ENCODE measurements at regions of chr1 and their contacts with region 1.

Region 1: DNA sequence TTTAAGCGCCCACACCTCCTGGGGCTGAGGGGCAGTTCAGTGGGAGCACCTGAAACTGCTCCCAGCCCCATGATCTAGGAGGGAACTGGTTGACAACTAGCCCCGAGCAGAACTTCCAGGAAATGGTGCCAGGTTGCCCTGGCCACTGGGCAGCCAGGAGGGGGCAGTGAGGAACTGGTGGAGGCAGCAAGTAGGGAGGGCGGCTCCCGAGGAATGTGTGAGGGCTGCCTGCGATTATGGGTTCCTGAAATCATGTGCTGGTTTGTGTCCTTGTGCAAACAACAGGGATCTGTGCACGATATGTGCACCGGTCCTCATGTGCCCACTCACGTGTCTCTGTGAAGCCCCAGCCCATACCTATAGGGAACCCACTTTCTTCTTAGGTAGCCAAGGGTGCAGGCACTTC is 9.9 kb downstream of the GPR3 start:
- DNase-seq: no peak
- ATAC-seq: no peak
- H3K4me3 Mint-ChIP-seq: peak overlapping the region; percentile 72
- H3K27ac Mint-ChIP-seq: peak overlapping the region; percentile 91
- H3K4me1 Mint-ChIP-seq: peaks cover 53% of the 10 kb centered on the region
- H3K27me3 Mint-ChIP-seq: no peaks in the 10 kb centered on the region
- CTCF ChIP-seq: no peak

Region 2: DNA sequence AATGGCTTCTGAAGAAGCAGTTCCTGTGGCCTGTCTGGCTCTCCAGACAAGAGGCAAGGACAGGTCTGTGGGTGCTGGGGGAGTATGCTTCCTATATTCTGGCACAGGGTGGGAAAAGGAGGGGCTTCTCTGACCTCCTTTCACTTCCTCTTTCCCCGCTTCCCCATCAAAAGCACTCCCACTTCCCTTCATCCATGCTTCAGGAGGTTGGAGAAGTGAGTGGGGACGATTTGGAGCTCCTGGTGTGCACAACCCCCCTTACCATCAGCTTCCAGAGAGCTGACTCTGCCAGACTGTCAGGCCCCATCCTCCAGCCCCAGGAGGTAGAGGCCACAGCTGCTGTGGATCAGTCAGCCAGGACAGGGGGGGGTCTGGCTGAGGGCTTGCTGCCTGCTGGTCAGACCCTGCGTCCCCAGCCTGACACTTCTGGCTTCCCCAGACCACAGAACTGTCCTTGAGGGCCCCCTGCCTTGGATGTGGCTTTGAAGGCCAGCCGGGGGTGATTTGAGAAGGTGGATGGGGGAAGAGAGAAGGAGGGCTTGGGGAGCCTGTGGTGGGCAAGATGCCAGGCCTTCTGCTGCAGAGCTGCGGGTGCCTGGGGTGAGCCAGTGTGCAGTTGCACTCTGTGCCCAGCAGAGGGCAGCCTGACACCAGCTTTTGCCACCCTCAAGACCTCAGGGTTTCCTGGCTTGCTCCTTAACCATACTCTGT is 101.9 kb before region 1 on chr1:
- CTCF ChIA-PET with region 1: interaction called, 208 read pairs
- POLR2A ChIA-PET with region 1: no interaction called
- intact Hi-C with region 1: no loop called
- DNase-seq: peak; percentile 72
- ATAC-seq: peak; percentile 90
- H3K4me3 Mint-ChIP-seq: no peak overlapping the region
- H3K27ac Mint-ChIP-seq: no peak overlapping the region
- H3K4me1 Mint-ChIP-seq: peaks cover 3% of the 10 kb centered on the region
- H3K27me3 Mint-ChIP-seq: no peaks in the 10 kb centered on the region
- CTCF ChIP-seq: peak; percentile 99

Region 3: GRCh38 chr1:27436204-27437159 is 34.1 kb after region 1 on chr1:
- CTCF ChIA-PET with region 1: interaction called, 5 read pairs
- POLR2A ChIA-PET with region 1: interaction called, 5 read pairs
- intact Hi-C with region 1: loop called (anchors 2 kb)
- DNase-seq: no peak
- ATAC-seq: peak; percentile 49
- H3K4me3 Mint-ChIP-seq: peak overlapping the region; percentile 63
- H3K27ac Mint-ChIP-seq: peak overlapping the region; percentile 91
- H3K4me1 Mint-ChIP-seq: peaks cover 87% of the 10 kb centered on the region
- H3K27me3 Mint-ChIP-seq: no peaks in the 10 kb centered on the region
- CTCF ChIP-seq: no peak

Region 4: GRCh38 chr1:27525296-27526272 is 123.2 kb after region 1 on chr1:
- CTCF ChIA-PET with region 1: no interaction called
- POLR2A ChIA-PET with region 1: interaction called, 5 read pairs
- intact Hi-C with region 1: loop called (anchors 1 kb)
- DNase-seq: peak; percentile 51
- ATAC-seq: peak; percentile 64
- H3K4me3 Mint-ChIP-seq: peak overlapping the region; percentile 41
- H3K27ac Mint-ChIP-seq: peak overlapping the region; percentile 79
- H3K4me1 Mint-ChIP-seq: peaks cover 76% of the 10 kb centered on the region
- H3K27me3 Mint-ChIP-seq: no peaks in the 10 kb centered on the region
- CTCF ChIP-seq: no peak

Region 5: DNA sequence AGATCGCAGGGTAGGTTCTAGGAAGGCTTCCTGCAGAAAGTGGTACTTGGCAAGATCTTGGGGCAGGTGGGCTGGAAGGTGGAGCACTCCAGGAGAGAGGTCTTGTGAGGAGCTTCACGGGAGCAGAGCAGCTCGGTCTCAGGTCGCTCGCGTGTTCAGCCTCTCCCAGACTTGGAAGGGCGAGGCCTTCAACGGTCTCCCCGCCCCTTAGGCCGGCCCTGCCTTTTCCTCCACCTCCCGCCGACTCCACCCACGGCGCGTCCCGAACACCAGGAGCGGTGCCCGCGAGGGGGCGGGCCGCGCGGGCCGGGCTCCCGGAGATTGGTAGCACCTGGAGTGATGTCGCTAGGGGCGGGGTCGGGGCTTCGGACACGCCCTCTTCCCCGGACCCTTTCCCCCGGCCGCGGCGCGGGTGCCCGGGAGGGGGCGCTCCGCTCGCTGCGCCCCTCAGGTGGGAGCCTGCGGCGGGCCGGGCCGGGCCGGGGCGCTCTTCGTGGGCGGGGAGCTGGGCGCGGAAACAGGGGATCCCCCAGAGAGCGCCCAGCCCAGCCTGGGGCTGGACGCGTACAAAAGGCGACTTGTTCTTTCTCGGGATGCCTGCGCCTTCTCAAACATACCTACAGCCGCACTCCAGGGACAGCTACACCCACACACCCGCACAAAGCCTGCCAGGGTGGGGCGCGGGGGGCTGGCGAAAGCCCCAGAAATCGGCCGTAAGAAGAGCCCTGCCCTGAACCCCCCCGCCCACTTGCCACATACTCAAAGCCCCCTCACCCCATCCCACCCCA is 166.1 kb after region 1 on chr1:
- CTCF ChIA-PET with region 1: interaction called, 11 read pairs
- POLR2A ChIA-PET with region 1: interaction called, 3 read pairs
- intact Hi-C with region 1: no loop called
- DNase-seq: peak; percentile 94
- ATAC-seq: peak; percentile 91
- H3K4me3 Mint-ChIP-seq: peak overlapping the region; percentile 73
- H3K27ac Mint-ChIP-seq: no peak overlapping the region
- H3K4me1 Mint-ChIP-seq: peaks cover 33% of the 10 kb centered on the region
- H3K27me3 Mint-ChIP-seq: no peaks in the 10 kb centered on the region
- CTCF ChIP-seq: no peak

Measured in activated B cell treated with CpG ODN at 0.5 μM for 24 hours (primary cell).